ENCODE measurements at regions of chr20 and their contacts with region 1.

Region 1: DNA sequence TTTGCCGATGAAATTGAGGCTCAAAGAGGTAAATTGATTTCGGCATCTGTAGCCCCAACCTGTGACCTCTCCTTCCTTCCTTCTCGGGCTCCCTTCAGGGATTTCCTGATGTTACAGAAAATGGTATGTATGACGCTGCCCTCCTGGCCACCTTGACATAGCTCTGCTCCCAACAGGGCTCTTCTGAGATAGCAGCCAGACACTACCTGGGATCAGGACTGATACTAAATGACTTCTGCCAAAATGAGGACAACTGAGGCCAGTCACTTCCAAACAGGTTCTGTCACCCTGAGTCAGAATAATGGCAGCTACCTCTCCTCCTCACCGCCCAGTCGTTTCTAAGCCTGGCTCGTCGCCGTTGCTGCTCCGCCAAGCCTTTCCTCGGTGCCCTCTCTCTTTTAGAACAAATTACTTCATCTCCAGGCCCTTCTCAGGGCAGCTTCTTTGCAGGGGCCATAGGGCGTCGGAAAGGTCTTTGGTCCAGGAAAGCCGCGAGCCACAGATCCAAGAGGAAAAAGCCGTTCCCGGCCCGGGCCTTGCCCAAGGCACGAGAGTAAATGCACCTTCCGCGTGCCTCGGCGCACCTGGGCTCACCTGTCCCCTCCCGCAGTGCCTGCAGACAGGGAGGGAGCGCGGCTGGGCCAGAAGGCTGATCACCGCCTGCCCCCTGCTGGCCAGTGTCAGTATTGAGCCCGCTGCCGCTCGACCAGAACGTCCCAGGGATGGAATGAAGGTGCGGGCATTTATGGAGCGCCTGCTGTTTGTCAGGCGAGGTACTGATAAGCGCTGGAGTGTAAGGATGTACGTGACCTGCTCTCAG is 904 bp upstream of the LPIN3 start:
- DNase-seq: no peak
- H3K4me3 ChIP-seq: peak overlapping the region; percentile 63
- CTCF ChIP-seq: peak; percentile 96

Region 2: GRCh38 chr20:41136680-41137613 is 202.8 kb before region 1 on chr20 and contains the start of gene PLCG1:
- CTCF ChIA-PET with region 1: interaction called, 17 read pairs
- POLR2A ChIA-PET with region 1: no interaction called
- DNase-seq: peak; percentile 9
- H3K4me3 ChIP-seq: peak within 1 kb of the TSS; percentile 75
- CTCF ChIP-seq: no peak

Region 3: DNA sequence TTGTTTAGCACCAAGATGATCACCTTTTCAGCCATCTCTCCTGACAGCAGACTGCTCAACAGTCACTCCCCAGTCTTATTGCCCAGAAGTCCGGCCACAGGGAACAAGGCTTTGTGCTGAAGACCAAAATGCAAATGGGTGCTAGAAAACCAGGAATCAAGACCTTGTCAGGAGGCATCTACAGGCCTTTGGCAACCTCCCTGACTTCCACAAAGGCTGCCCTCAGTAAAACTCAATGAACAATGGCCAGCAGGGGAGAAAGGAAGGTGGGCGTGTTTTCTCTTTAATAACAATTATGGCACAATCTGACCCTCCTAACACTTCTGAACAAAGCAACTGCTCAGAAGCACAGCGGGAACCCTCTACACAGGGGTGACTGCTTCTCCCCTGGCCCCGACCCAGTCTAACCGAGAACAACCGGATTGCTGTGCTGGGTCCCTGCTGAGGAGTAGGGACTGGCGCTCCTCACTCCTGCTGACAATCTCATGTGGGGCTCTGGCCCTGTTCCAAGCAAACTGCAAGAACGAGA is 160.7 kb before region 1 on chr20:
- CTCF ChIA-PET with region 1: interaction called, 404 read pairs
- POLR2A ChIA-PET with region 1: no interaction called
- DNase-seq: no peak
- H3K4me3 ChIP-seq: no peak overlapping the region
- CTCF ChIP-seq: no peak

Region 4: DNA sequence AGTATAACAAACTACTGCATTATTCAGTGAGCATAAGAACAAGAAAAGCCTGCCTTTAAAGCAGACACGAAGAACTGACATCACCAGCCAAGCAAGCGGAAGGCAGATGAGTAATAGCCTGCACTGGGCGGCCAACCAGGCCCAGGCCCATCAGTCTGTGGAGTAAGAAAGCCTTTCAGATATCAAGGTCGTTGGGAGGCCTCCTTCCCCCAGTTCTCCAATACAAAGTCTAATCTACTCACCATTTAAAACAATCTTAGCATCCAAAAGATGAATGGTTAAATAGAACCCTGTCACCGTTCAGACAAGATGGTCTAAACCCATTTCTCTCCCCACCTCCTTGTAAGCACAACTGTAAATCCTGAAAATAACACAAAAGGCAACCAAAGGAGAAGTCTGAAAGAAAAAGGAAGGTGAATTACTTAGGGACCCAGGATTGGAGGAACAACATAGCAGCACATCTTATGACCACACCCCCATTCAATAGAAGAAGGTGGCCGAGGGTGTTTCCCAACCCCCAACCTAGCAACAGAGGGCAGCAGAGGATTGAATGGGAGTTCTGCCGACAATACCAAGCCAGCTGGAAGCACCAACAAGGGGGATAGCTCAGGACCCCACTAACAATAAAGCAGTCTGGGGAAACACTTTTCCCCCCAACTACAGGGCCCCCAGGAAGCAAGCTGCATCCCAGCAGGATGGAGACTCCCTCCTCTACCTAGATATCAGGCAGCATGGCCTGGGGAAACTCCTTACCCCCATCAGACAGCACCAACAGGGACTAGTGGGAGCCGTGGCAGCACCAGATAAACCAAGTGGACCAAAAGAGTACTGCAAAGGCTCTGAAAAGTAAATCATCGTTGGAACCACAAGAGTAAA is 90.1 kb before region 1 on chr20:
- CTCF ChIA-PET with region 1: interaction called, 11 read pairs
- POLR2A ChIA-PET with region 1: interaction called, 4 read pairs
- DNase-seq: peak; percentile 50
- H3K4me3 ChIP-seq: no peak overlapping the region
- CTCF ChIP-seq: peak; percentile 20

Region 5: GRCh38 chr20:41350408-41350962 is 10.8 kb after region 1 on chr20:
- CTCF ChIA-PET with region 1: interaction called, 12 read pairs
- POLR2A ChIA-PET with region 1: no interaction called
- DNase-seq: no peak
- H3K4me3 ChIP-seq: no peak overlapping the region
- CTCF ChIP-seq: no peak